Dendritic cell treated with granulocyte-macrophage colony-stimulating factor and Interleukin-4, amounts not matched to agents 40 ng/mL and 50 ng/mL, for 4 days (primary cell): ENCODE measurements at regions of chr5 and their contacts with region 1.

Region 1: DNA sequence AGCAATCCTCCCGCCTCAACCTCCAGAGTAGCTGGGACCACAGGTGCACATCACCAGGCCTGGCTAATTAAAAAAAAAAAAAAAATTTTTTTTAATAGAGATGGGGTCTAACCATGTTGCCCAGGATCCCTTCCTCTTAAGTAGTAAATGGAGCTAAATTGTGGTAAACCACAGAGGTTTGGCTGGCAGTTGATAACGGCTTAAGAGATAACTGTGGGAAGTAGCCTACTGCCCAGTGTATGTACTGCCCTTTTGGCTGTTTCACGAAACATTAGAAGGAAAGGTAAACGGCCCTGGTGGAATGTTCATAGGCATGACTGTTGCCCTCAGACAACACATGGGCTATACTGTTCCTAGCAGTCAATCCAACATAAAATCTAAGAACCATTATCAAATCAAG is 44.4 kb downstream of the HMGCR start:
- H3K4me3 Mint-ChIP-seq: no peak overlapping the region
- H3K27ac Mint-ChIP-seq: no peak overlapping the region
- H3K4me1 Mint-ChIP-seq: no peaks in the 10 kb centered on the region
- H3K27me3 Mint-ChIP-seq: no peaks in the 10 kb centered on the region

Region 2: GRCh38 chr5:74613283-74613682 is 768.2 kb before region 1 on chr5:
- intact Hi-C with region 1: no loop called
- H3K4me3 Mint-ChIP-seq: no peak overlapping the region
- H3K27ac Mint-ChIP-seq: no peak overlapping the region
- H3K4me1 Mint-ChIP-seq: peaks cover 13% of the 10 kb centered on the region
- H3K27me3 Mint-ChIP-seq: no peaks in the 10 kb centered on the region

Region 3: DNA sequence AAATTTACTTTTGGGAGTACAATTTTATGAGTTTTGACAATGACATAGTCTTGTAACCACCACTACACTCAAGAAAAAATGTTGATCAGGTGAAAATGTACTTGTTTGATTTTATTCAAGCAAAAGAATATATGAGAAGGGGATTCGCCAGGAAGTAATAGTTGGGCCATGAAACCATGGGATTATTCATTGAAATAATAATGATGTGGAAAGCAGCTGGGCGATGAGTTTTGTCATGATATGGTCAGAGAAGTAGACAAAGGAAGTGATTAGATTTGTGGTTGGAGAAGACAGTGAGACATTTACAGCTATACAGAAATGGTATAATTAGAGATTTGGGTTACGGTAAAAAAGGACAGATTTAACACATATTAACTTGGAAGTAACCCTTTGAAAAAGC is 33.2 kb before region 1 on chr5:
- intact Hi-C with region 1: loop called (anchors 5 kb)
- H3K4me3 Mint-ChIP-seq: no peak overlapping the region
- H3K27ac Mint-ChIP-seq: no peak overlapping the region
- H3K4me1 Mint-ChIP-seq: no peaks in the 10 kb centered on the region
- H3K27me3 Mint-ChIP-seq: no peaks in the 10 kb centered on the region